H1 (cell line): ENCODE measurements at regions of chr4 and their contacts with region 1.

Region 1: DNA sequence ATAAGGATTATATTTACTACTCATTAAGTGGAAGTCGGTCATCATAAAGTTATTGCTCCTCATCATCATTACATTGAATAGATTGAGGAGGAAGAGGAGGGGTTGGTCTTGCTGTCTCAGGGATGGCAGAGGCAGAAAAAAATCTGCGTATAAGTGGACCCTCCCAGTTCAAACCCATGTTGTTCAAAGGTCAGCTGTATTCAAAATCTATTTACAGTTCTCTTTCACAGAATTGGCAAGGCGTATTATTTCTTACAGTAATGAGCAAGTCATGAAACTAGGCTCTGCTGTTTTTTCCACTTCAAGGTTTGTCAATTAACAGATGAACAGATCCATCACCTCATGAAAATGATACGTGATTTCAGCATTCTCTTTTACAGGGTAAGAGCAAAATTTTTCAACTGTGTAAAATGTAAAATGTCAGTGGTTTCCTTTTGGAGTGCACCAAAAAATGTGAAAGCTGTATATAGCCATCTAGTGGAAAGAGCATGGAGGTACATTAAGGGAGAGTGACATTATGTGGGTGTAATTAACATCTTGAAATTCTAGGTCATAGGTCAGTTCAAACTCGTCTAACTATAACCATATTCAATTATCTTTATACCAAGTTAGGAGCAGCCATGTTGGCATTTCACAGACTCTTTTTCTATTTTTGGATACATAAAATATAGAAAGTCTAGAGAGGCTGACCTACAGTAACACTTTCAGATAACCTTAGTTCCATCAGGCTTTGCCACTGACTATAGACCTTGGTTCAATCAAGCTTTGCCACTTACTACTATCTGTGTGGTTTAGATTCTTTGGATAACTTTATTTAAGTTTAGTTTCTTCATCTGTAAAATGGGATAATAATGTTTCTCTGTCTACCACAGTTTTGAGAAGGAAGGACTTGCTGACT is 30.1 kb downstream of the NEIL3 start:
- DNase-seq: no peak
- H3K4me3 ChIP-seq: no peak overlapping the region
- H3K27ac ChIP-seq: no peak overlapping the region
- H3K4me1 ChIP-seq: no peaks in the 10 kb centered on the region
- H3K27me3 ChIP-seq: no peaks in the 10 kb centered on the region
- CTCF ChIP-seq: peak in 2 of 3 experiments; percentile 31 to 62; a peak in 2 of 4 replicates
- EP300 ChIP-seq: no peak
- POLR2A ChIP-seq: no peak
- RAD21 ChIP-seq: peak; percentile 64 to 65

Region 2: DNA sequence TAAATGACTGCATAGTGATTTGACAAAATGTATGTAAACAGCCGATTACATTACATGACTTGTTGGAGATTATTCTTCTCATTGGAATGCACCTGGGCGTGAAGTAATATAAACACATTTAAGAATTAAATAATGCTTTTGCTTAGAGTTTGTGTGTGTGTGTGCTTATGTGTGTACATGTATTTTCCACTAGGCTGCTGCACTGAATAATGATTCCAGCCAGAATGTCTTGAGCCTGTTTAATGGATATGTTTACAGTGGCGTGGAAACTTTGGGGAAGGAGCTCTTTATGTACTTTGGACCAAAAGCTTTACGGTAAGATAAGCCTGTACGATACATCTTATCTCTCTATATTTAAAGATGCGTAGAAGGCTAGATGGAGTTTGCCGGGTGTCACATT is 17.5 kb before region 1 on chr4:
- CTCF ChIA-PET with region 1: interaction called, 11 read pairs
- POLR2A ChIA-PET with region 1: no interaction called
- DNase-seq: no peak
- H3K4me3 ChIP-seq: no peak overlapping the region
- H3K27ac ChIP-seq: no peak overlapping the region
- H3K4me1 ChIP-seq: no peaks in the 10 kb centered on the region
- H3K27me3 ChIP-seq: no peaks in the 10 kb centered on the region
- CTCF ChIP-seq: no peak
- EP300 ChIP-seq: no peak
- POLR2A ChIP-seq: no peak
- RAD21 ChIP-seq: no peak